ENCODE measurements at regions of chr4 and their contacts with region 1.

Region 1: GRCh38 chr4:40403081-40403480 is 67.9 kb downstream of the CHRNA9 start:
- DNase-seq: no peak
- H3K4me3 ChIP-seq: no peak overlapping the region
- H3K27ac ChIP-seq: no peak overlapping the region
- H3K4me1 ChIP-seq: peaks cover 7% of the 10 kb centered on the region
- H3K27me3 ChIP-seq: no peaks in the 10 kb centered on the region
- CTCF ChIP-seq: no peak
- POLR2A ChIP-seq: no peak

Region 2: GRCh38 chr4:40149960-40150385 is 253.1 kb before region 1 on chr4:
- intact Hi-C with region 1: no loop called
- DNase-seq: no peak
- H3K4me3 ChIP-seq: no peak overlapping the region
- H3K27ac ChIP-seq: no peak overlapping the region
- H3K4me1 ChIP-seq: no peaks in the 10 kb centered on the region
- H3K27me3 ChIP-seq: no peaks in the 10 kb centered on the region
- CTCF ChIP-seq: peak; percentile 79 to 83 (median 79)
- POLR2A ChIP-seq: no peak

Region 3: DNA sequence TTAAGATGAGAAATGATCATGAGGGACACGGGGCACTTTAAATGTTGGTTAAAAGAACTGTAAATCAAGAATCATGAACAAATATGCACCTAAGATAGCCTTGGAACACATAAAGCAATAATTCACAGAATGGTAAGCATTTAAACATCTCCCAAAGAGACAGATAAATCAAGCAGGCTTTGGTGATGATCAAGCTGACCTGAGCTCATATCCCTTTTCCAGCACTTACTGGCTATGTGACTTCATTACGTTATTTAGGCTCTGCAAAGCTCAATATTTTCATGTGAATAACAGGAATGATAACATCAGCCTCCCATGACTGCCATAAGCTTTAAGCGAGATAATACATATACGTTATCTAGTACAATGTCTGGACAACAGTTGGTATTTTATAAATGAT is 13.1 kb before region 1 on chr4:
- intact Hi-C with region 1: loop called (anchors 1 kb)
- DNase-seq: no peak
- H3K4me3 ChIP-seq: no peak overlapping the region
- H3K27ac ChIP-seq: no peak overlapping the region
- H3K4me1 ChIP-seq: no peaks in the 10 kb centered on the region
- H3K27me3 ChIP-seq: no peaks in the 10 kb centered on the region
- CTCF ChIP-seq: no peak
- POLR2A ChIP-seq: no peak

Measured in vagina (tissue), 2 donors.